Activated CD4-positive, alpha-beta T cell treated with anti-CD3 and anti-CD28 coated beads, Interleukin-2, amount 10 ng/mL, durations not matched to agents 7 days and 5 days (primary cell): ENCODE measurements at regions of chr10 and their contacts with region 1.

Region 1: GRCh38 chr10:7417103-7417623 is 6.3 kb upstream of the SFMBT2 start:
- DNase-seq: no peak
- H3K4me3 Mint-ChIP-seq: no peak overlapping the region
- H3K27ac Mint-ChIP-seq: peak overlapping the region; percentile 10
- H3K4me1 Mint-ChIP-seq: peaks cover 33% of the 10 kb centered on the region
- H3K27me3 Mint-ChIP-seq: peaks cover 26% of the 10 kb centered on the region

Region 2: GRCh38 chr10:6920072-6921019 is 496.8 kb before region 1 on chr10:
- CTCF ChIA-PET with region 1: interaction called, 11 read pairs
- POLR2A ChIA-PET with region 1: no interaction called
- DNase-seq: peak; percentile 80
- H3K4me3 Mint-ChIP-seq: no peak overlapping the region
- H3K27ac Mint-ChIP-seq: no peak overlapping the region
- H3K4me1 Mint-ChIP-seq: peaks cover 13% of the 10 kb centered on the region
- H3K27me3 Mint-ChIP-seq: peaks cover 5% of the 10 kb centered on the region